ENCODE measurements at regions of chrX and their contacts with region 1.

Region 1: GRCh38 chrX:48897621-48898306 is at the starts of genes PQBP1 and TIMM17B:
- DNase-seq: peak; percentile 73
- ATAC-seq: peak; percentile 86
- H3K4me3 Mint-ChIP-seq: peak within 1 kb of the TSS; percentile 94
- H3K27ac Mint-ChIP-seq: peak within 1 kb of the TSS; percentile 97
- H3K4me1 Mint-ChIP-seq: peaks cover 29% of the 10 kb centered on the region
- H3K27me3 Mint-ChIP-seq: no peaks in the 10 kb centered on the region
- CTCF ChIP-seq: no peak
- total RNA-seq, gene PQBP1: 81.6 and 91.5 TPM in 2 replicates
- total RNA-seq, gene TIMM17B: 47.8 and 52.6 TPM in 2 replicates

Region 2: DNA sequence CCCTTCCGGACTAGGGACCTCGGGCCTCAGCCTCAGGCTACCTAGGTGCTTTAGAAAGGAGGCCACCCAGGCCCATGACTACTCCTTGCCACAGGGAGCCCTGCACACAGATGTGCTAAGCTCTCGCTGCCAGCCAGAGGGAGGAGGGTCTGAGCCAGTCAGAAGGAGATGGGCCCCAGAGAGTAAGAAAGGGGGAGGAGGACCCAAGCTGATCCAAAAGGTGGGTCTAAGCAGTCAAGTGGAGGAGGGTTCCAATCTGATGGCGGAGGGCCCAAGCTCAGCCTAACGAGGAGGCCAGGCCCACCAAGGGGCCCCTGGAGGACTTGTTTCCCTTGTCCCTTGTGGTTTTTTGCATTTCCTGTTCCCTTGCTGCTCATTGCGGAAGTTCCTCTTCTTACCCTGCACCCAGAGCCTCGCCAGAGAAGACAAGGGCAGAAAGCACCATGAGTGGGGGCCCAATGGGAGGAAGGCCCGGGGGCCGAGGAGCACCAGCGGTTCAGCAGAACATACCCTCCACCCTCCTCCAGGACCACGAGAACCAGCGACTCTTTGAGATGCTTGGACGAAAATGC is 214.3 kb before region 1 on chrX and contains the start of gene WAS:
- CTCF ChIA-PET with region 1: no interaction called
- POLR2A ChIA-PET with region 1: interaction called, 11 read pairs
- intact Hi-C with region 1: no loop called
- DNase-seq: peak; percentile 20
- ATAC-seq: peak; percentile 87
- H3K4me3 Mint-ChIP-seq: peak within 1 kb of the TSS; percentile 93
- H3K27ac Mint-ChIP-seq: peak within 1 kb of the TSS; percentile 94
- H3K4me1 Mint-ChIP-seq: peaks cover 58% of the 10 kb centered on the region
- H3K27me3 Mint-ChIP-seq: no peaks in the 10 kb centered on the region
- CTCF ChIP-seq: no peak
- total RNA-seq, gene WAS: 101 and 102 TPM in 2 replicates

Region 3: GRCh38 chrX:48696301-48697181 is 201.2 kb before region 1 on chrX and contains the start of gene SUV39H1:
- CTCF ChIA-PET with region 1: no interaction called
- POLR2A ChIA-PET with region 1: interaction called, 10 read pairs
- intact Hi-C with region 1: no loop called
- DNase-seq: peak; percentile 70
- ATAC-seq: peak; percentile 96
- H3K4me3 Mint-ChIP-seq: peak within 1 kb of the TSS; percentile 88
- H3K27ac Mint-ChIP-seq: peak within 1 kb of the TSS; percentile 91
- H3K4me1 Mint-ChIP-seq: peaks cover 19% of the 10 kb centered on the region
- H3K27me3 Mint-ChIP-seq: no peaks in the 10 kb centered on the region
- CTCF ChIP-seq: no peak
- total RNA-seq, gene SUV39H1: 9.1 and 10.8 TPM in 2 replicates

Region 4: GRCh38 chrX:48737213-48737938 is 160.4 kb before region 1 on chrX:
- CTCF ChIA-PET with region 1: no interaction called
- POLR2A ChIA-PET with region 1: interaction called, 16 read pairs
- intact Hi-C with region 1: loop called (anchors 2 kb)
- DNase-seq: peak; percentile 65
- ATAC-seq: peak; percentile 97
- H3K4me3 Mint-ChIP-seq: peak overlapping the region; percentile 91
- H3K27ac Mint-ChIP-seq: peak overlapping the region; percentile 94
- H3K4me1 Mint-ChIP-seq: peaks cover 15% of the 10 kb centered on the region
- H3K27me3 Mint-ChIP-seq: no peaks in the 10 kb centered on the region
- CTCF ChIP-seq: no peak

Region 5: GRCh38 chrX:48911412-48912182 is 13.8 kb after region 1 on chrX and contains the start of gene SLC35A2:
- CTCF ChIA-PET with region 1: interaction called, 3 read pairs
- POLR2A ChIA-PET with region 1: interaction called, 55 read pairs
- intact Hi-C with region 1: loop called (anchors 1 kb)
- DNase-seq: peak; percentile 76
- ATAC-seq: peak; percentile 74
- H3K4me3 Mint-ChIP-seq: peak within 1 kb of the TSS; percentile 94
- H3K27ac Mint-ChIP-seq: peak within 1 kb of the TSS; percentile 94
- H3K4me1 Mint-ChIP-seq: peaks cover 55% of the 10 kb centered on the region
- H3K27me3 Mint-ChIP-seq: no peaks in the 10 kb centered on the region
- CTCF ChIP-seq: no peak
- total RNA-seq, gene SLC35A2: 17.3 and 18.4 TPM in 2 replicates

Region 6: DNA sequence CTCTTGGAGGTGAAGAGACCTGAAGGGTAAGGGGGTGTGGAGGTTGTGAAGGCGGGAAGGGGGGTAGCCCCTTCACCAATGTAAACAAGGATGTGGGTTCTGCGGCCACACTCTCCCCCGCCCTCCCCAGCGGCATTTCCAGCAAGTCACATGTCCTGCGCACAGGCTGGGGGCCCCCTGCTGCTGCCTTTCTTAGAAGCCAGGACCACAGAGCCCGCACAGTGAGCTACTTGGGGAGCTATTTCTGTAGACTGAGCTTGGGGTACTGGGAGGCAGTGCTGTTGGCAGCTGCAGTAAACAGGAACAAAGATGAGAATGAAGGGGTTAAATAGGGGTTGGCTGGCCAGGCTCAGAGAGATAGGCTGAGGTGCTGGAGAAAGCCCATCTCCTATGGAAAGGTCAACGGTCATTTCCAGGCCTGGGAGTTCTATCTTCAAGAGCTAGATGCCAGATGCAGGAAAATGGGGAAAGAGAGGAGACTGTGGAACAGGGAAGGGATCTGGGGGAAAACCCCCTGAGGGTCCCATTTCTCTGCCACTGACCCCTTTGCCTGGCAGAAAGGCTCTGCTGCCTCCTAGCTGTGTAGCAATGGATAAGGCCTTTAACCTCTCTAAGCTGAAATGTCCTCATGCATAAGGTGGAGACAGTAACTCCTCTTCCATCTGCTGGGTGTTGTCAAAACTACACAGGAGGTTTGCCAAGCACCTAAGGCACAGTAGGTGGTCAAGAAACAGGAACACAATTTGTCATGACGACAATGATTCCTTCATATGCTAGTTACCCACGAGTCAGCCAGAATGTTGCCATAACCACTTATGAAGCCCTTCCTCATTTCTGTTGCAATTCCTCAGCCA is 39.5 kb after region 1 on chrX:
- CTCF ChIA-PET with region 1: interaction called, 8 read pairs
- POLR2A ChIA-PET with region 1: interaction called, 65 read pairs
- intact Hi-C with region 1: loop called (anchors 1 kb)
- DNase-seq: peak; percentile 68
- ATAC-seq: peak; percentile 54
- H3K4me3 Mint-ChIP-seq: peak overlapping the region; percentile 77
- H3K27ac Mint-ChIP-seq: peak overlapping the region; percentile 98
- H3K4me1 Mint-ChIP-seq: peaks cover 87% of the 10 kb centered on the region
- H3K27me3 Mint-ChIP-seq: no peaks in the 10 kb centered on the region
- CTCF ChIP-seq: no peak

Region 7: GRCh38 chrX:49002091-49002935 is 104.5 kb after region 1 on chrX and contains the start of gene GRIPAP1:
- CTCF ChIA-PET with region 1: no interaction called
- POLR2A ChIA-PET with region 1: interaction called, 4 read pairs
- intact Hi-C with region 1: loop called (anchors 1 kb)
- DNase-seq: peak; percentile 52
- ATAC-seq: peak; percentile 88
- H3K4me3 Mint-ChIP-seq: peak within 1 kb of the TSS; percentile 99
- H3K27ac Mint-ChIP-seq: peak within 1 kb of the TSS; percentile 97
- H3K4me1 Mint-ChIP-seq: peaks cover 24% of the 10 kb centered on the region
- H3K27me3 Mint-ChIP-seq: no peaks in the 10 kb centered on the region
- CTCF ChIP-seq: no peak
- total RNA-seq, gene GRIPAP1: 97.3 and 117 TPM in 2 replicates